Activated CD4-positive, alpha-beta memory T cell treated with anti-CD3 and anti-CD28 coated beads, Interleukin-2, amount 10 ng/mL, durations not matched to agents 7 days and 5 days (primary cell): ENCODE measurements at regions of chr12 and their contacts with region 1.

Region 1: DNA sequence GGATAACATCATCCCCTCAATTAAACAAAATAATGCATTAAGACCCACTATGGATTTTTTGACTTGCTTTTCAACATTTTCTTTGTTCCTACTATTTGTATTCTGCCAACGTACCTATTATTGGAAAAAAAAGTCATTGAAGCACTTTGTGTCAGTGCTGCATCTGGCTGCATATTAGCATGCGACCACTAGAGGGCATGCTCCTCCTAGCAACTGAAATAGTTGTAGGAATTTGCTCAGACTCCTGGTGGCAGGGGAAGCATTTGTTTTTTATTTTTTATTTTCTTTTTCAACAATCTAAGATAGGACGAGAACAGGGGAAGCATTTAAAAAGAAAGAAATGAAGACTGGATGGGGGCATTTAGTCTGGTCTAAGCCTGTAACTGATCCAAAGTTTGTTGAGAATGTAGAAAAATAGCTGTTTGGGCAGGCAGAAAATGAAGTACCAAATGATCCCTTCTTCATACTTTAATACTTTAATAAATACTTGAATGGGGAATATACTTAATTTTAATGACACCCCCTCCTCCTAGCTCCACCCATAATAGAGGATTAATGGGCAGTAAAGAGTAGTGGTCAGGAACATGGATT is 14.5 kb upstream of the CLEC4A start:
- DNase-seq: peak; percentile 80
- H3K4me3 Mint-ChIP-seq: no peak overlapping the region
- H3K27ac Mint-ChIP-seq: no peak overlapping the region
- H3K4me1 Mint-ChIP-seq: peaks cover 10% of the 10 kb centered on the region
- H3K27me3 Mint-ChIP-seq: no peaks in the 10 kb centered on the region

Region 2: DNA sequence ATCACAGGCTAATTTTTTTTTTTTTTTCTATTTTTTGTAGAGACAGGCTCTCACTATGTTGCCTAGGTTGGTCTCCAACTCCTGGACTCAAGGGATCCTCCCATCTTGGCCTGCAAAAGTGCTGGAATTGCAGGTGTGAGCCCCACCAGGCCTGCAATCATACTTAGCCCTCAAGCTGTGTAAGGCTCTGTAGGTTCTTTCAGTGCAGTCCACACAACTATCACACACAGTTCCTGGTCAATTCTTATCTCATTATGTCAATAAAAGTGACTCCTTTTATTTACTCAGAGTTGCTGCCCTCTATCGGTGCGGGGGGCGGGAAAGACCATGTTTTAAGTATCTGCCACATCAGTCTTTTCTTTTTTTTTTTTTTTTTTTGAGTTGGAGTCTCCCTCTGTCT is 201.9 kb before region 1 on chr12:
- CTCF ChIA-PET with region 1: no interaction called
- POLR2A ChIA-PET with region 1: no interaction called
- DNase-seq: no peak
- H3K4me3 Mint-ChIP-seq: no peak overlapping the region
- H3K27ac Mint-ChIP-seq: no peak overlapping the region
- H3K4me1 Mint-ChIP-seq: no peaks in the 10 kb centered on the region
- H3K27me3 Mint-ChIP-seq: no peaks in the 10 kb centered on the region

Region 3: GRCh38 chr12:8120072-8120713 is 11.3 kb after region 1 on chr12:
- CTCF ChIA-PET with region 1: interaction called, 15 read pairs
- POLR2A ChIA-PET with region 1: no interaction called
- DNase-seq: no peak
- H3K4me3 Mint-ChIP-seq: no peak overlapping the region
- H3K27ac Mint-ChIP-seq: no peak overlapping the region
- H3K4me1 Mint-ChIP-seq: no peaks in the 10 kb centered on the region
- H3K27me3 Mint-ChIP-seq: no peaks in the 10 kb centered on the region

Region 4: GRCh38 chr12:8226355-8226754 is 117.5 kb after region 1 on chr12:
- CTCF ChIA-PET with region 1: interaction called, 31 read pairs
- POLR2A ChIA-PET with region 1: no interaction called
- DNase-seq: no peak
- H3K4me3 Mint-ChIP-seq: no peak overlapping the region
- H3K27ac Mint-ChIP-seq: no peak overlapping the region
- H3K4me1 Mint-ChIP-seq: peaks cover 16% of the 10 kb centered on the region
- H3K27me3 Mint-ChIP-seq: no peaks in the 10 kb centered on the region